HEK293T (cell line): ENCODE measurements at regions of chr11 and their contacts with region 1.

Region 1: DNA sequence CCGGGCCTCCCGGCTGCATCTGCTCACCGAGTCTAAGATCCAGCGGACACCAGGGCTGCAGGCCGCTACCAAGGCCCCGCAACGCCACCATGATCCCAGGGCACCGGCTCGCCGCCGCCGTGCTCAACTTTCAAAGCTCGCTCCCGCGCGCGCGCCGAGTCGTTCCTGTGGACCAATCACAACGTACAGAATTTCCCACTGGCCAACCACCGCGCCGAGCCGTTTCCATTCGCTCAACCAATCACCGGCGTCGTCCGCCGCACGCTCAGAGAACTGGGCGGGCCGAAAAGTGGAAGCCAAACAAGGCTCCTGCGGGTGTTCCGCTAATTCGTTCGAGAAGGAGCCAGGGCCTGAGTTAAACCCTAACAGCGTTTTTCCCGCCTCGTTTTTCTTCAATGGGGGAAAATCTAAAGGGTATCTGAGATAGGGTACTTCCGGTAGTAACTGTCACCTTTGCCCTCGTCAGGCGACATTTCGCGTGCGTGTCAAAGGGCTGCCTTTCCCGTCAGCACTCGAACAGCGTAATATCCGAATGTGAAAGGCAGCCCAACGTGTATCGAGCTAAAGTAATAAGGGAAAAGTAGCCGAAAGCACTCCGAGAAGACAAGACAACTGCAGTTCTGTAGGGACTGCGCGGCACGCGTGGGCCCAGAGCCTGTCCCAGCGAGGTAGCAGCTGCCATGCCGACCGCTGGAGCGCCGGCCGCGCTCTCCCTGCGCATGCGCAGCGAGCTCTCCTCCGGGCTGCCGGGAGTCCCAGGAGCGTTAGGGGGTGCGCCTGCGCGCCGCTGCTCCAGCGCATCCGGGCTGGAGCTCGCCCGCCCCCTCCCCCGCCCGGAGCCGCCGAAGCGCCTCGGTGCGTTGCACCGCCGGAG is at the starts of genes NCAPD3 and VPS26B:
- DNase-seq: peak; percentile 98

Region 2: GRCh38 chr11:134207538-134208239 is 16.4 kb before region 1 on chr11:
- CTCF ChIA-PET with region 1: interaction called, 5 read pairs
- POLR2A ChIA-PET with region 1: interaction called, 13 read pairs
- DNase-seq: no peak

Region 3: GRCh38 chr11:134235399-134235798 is 11.3 kb after region 1 on chr11:
- CTCF ChIA-PET with region 1: no interaction called
- POLR2A ChIA-PET with region 1: interaction called, 25 read pairs
- DNase-seq: no peak

Region 4: DNA sequence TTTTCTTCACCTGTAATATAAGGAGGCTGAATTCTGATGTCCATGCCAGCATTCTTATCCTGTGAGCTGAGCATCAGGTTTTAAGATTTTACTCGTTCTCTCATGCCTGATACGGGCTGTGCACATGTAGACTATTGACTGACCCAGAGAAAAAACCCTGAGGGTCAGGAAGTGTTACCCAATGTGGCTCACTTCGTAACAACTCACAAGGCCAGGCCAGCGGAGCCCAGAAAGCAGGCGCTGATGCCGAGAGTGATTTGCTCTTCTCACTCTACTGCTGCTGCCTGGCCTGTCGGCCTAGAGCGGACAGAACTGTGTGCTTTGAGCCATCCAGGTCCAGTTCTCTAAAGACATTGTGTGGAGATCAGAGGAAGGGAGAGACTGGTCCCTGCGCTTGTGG is 18.3 kb after region 1 on chr11:
- CTCF ChIA-PET with region 1: interaction called, 4 read pairs
- POLR2A ChIA-PET with region 1: interaction called, 11 read pairs
- DNase-seq: no peak

Region 5: GRCh38 chr11:134253188-134253993 is 29.3 kb after region 1 on chr11 and contains the starts of genes ACAD8 and THYN1:
- CTCF ChIA-PET with region 1: no interaction called
- POLR2A ChIA-PET with region 1: interaction called, 22 read pairs
- DNase-seq: peak; percentile 99

Region 6: GRCh38 chr11:134275534-134276395 is 51.7 kb after region 1 on chr11 and contains the start of gene GLB1L3:
- CTCF ChIA-PET with region 1: no interaction called
- POLR2A ChIA-PET with region 1: interaction called, 20 read pairs
- DNase-seq: peak; percentile 68

Region 7: GRCh38 chr11:134313821-134314607 is 89.9 kb after region 1 on chr11:
- CTCF ChIA-PET with region 1: no interaction called
- POLR2A ChIA-PET with region 1: no interaction called
- DNase-seq: no peak

Region 8: GRCh38 chr11:134372964-134373363 is 148.9 kb after region 1 on chr11:
- CTCF ChIA-PET with region 1: no interaction called
- POLR2A ChIA-PET with region 1: no interaction called
- DNase-seq: no peak